CD4-positive, alpha-beta memory T cell (primary cell): ENCODE measurements at regions of chr9 and their contacts with region 1.

Region 1: DNA sequence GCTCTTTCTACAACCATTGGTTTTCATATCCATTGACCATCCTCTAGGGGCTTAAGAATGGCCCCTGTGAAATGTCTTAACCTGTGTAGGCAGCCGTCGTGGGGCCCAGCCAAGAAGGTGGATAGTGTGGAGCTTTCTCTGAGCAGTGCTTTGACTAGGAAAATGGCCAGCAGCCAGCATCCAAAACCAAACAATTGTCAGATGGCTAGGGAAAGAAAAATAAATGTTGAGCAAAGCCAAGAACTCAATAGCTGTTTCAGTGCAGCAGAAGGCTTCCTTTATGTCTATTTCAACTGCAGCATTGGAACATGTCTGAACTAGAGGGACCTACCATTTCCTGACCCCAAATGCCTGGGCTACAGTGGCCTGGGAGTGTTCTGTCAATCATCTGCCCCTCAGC is 374.9 kb downstream of the TLE4 start:
- DNase-seq: no peak
- H3K4me3 ChIP-seq: no peak overlapping the region
- H3K4me3 Mint-ChIP-seq: no peak overlapping the region
- H3K27ac ChIP-seq: no peak overlapping the region
- H3K27ac Mint-ChIP-seq: no peak overlapping the region
- H3K4me1 ChIP-seq: no peaks in the 10 kb centered on the region
- H3K4me1 Mint-ChIP-seq: no peaks in the 10 kb centered on the region
- H3K27me3 ChIP-seq: no peaks in the 10 kb centered on the region
- H3K27me3 Mint-ChIP-seq: no peaks in the 10 kb centered on the region

Region 2: DNA sequence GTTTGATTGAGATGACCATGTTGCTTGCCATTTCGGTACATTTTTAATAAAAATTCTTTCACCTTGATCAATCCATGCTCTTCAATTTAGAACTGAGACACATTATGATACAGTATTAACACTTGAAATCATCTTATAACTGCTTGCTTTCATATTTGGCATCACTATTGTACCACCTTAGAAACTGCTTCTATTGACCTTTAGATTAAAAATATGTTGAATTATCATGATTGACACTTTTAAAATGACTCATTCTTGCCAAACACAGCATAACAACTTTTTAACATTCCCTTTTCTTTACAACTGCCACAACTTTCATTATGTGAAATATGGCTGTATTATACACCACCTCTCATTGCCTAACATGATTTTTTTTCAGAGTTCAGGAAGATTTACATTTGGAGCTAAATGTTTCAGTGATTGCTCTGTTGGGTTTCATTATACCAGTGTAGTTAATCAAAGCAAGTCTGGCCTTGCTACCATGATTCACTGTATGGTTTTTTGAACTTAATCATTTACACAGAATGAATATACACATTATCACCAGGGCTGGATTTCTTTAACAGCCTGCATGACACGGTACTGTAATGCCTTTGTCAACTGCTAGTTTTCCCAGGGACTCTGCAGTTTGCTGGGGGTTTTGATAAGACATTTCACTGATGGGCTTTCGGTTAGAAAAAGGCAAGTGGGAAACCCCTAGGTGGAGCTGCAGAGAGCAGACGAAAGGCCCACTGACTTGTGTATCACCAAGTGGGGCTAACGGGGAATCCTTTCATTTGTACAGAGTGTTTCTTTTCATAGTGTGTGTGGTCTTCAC is 468.5 kb before region 1 on chr9:
- CTCF ChIA-PET with region 1: no interaction called
- POLR2A ChIA-PET with region 1: no interaction called
- intact Hi-C with region 1: loop called (anchors 5 kb)
- DNase-seq: peak in 3 of 5 donors; percentile 9 to 16 (median 15)
- H3K4me3 ChIP-seq: no peak overlapping the region
- H3K4me3 Mint-ChIP-seq: no peak overlapping the region
- H3K27ac ChIP-seq: no peak overlapping the region
- H3K27ac Mint-ChIP-seq: peak overlapping the region in 2 of 7 donors; percentile 3 to 10
- H3K4me1 ChIP-seq: no peaks in the 10 kb centered on the region
- H3K4me1 Mint-ChIP-seq: peaks cover 0 to 4% (median under 1%) of the 10 kb centered on the region in 4 donors
- H3K27me3 ChIP-seq: no peaks in the 10 kb centered on the region
- H3K27me3 Mint-ChIP-seq: no peaks in the 10 kb centered on the region

Region 3: DNA sequence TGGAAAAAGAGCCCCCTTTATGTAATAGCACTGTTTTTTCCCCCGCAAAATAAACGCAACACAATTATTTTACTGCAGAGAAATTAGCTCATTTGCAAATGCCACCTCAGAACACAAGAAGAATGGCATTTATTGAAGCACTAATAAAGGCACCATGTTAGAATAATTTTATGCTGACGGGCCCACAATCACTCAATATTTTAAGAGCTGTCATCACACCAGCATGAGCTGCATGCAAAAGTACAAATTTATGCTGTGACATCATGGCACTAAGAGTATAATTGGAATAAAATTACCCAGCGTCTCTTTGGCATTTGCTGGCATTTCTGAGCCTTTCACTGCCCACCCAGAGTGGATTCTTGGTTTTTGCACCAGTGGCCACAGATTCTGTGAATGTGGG is 10.4 kb before region 1 on chr9:
- CTCF ChIA-PET with region 1: no interaction called
- POLR2A ChIA-PET with region 1: no interaction called
- intact Hi-C with region 1: no loop called
- DNase-seq: no peak
- H3K4me3 ChIP-seq: no peak overlapping the region
- H3K4me3 Mint-ChIP-seq: no peak overlapping the region
- H3K27ac ChIP-seq: no peak overlapping the region
- H3K27ac Mint-ChIP-seq: no peak overlapping the region
- H3K4me1 ChIP-seq: no peaks in the 10 kb centered on the region
- H3K4me1 Mint-ChIP-seq: no peaks in the 10 kb centered on the region
- H3K27me3 ChIP-seq: no peaks in the 10 kb centered on the region
- H3K27me3 Mint-ChIP-seq: peaks cover 0 to 4% of the 10 kb centered on the region in 2 donors